ENCODE measurements at regions of chr13 and their contacts with region 1.

Region 1: DNA sequence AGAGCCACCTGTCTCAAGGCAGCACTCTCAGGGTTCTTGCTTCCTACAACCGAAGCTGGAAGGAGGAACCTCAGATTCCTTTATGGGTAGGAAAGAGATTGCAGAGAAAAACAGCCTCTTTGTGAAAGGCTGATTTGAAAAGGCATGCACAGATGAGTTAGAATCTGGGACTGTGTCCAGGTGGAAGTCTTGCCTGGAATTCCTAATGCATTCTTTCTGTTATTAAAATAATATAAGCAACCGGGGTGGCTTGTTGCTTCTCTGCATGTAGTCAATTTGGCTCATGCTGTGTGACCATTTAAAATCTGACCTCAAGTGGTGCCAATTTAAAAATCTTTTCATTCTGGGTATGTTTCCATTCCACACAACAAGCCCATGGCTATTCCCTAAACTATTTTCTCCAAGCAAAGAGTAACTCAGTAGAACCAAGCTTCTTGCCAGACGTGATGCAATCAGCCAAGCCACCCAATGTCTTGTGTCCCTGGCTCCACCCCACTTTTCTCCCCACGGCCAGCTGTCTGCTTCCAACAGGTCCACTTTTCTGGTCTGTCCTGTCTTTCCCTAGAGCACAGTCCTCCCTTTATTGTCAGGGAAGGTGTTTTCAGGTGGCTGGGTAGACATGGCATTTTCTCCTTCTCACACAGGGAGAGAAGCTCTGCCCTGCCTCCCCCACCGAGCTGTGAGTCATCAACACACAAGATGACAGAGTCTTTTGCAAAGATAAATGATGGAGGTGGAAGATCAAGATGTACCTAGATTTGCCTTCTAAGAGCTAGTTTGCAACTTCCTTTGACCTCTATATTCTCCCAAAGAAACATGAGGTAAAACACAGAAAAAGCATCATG is 394.3 kb downstream of the FOXO1 start:
- DNase-seq: peak; percentile 82 to 86
- ATAC-seq: peak; percentile 88
- H3K4me3 ChIP-seq: no peak overlapping the region
- H3K27ac ChIP-seq: peak overlapping the region; percentile 90 to 99
- H3K4me1 ChIP-seq: peaks cover 2 to 4% of the 10 kb centered on the region in 2 donors
- H3K27me3 ChIP-seq: no peaks in the 10 kb centered on the region

Region 2: DNA sequence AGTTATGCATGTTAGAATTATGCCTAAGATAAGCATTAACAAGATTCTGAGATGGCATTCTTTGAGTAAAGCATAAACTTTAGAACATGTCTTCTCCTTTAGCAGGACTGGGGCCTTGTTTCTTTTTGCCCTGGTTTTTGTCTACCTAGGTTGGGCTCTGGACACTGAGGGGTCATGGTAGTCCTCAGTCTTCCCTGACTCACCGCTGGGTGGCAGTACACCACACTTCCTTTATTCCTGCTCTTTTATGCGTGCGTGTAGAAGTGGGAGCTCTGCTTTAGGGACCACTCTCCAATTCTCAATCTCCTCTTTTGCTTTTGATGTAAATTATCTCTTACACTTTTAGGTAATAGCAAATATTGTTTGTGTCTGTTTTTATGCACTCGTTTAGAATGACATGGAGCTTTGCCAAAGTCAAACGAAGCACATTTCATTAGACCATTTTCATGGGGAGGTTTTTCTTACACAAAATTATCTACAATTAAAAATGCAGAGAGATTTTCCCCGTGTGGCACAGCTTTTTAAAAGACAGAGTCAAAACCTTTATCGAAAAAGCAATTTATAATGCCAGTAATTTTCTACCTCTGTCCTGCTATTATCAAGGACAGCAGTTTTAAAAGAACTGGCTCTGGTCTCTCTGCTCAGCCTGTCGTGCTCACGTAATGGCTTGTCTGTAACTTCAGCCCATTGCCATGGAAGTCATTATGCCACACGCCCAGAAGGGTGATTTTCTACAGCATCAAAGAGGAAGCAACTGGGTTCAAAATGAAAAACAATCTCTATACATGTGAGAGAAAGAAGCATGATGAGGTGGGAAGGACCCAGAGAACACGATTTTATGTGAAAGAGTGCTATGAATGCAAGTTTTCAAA is 202.7 kb before region 1 on chr13:
- intact Hi-C with region 1: loop called in 1 of 2 experiments (anchors 1 kb)
- DNase-seq: peak; percentile 83 to 87
- ATAC-seq: peak; percentile 94
- H3K4me3 ChIP-seq: peak overlapping the region in 1 of 2 donors; percentile 31
- H3K27ac ChIP-seq: no peak overlapping the region
- H3K4me1 ChIP-seq: no peaks in the 10 kb centered on the region
- H3K27me3 ChIP-seq: no peaks in the 10 kb centered on the region

Region 3: GRCh38 chr13:40236566-40237168 is 35.5 kb before region 1 on chr13:
- intact Hi-C with region 1: no loop called
- DNase-seq: peak; percentile 63 to 78
- ATAC-seq: peak; percentile 86
- H3K4me3 ChIP-seq: no peak overlapping the region
- H3K27ac ChIP-seq: peak overlapping the region; percentile 99
- H3K4me1 ChIP-seq: peaks cover 0 to 1% of the 10 kb centered on the region in 2 donors
- H3K27me3 ChIP-seq: no peaks in the 10 kb centered on the region

Region 4: DNA sequence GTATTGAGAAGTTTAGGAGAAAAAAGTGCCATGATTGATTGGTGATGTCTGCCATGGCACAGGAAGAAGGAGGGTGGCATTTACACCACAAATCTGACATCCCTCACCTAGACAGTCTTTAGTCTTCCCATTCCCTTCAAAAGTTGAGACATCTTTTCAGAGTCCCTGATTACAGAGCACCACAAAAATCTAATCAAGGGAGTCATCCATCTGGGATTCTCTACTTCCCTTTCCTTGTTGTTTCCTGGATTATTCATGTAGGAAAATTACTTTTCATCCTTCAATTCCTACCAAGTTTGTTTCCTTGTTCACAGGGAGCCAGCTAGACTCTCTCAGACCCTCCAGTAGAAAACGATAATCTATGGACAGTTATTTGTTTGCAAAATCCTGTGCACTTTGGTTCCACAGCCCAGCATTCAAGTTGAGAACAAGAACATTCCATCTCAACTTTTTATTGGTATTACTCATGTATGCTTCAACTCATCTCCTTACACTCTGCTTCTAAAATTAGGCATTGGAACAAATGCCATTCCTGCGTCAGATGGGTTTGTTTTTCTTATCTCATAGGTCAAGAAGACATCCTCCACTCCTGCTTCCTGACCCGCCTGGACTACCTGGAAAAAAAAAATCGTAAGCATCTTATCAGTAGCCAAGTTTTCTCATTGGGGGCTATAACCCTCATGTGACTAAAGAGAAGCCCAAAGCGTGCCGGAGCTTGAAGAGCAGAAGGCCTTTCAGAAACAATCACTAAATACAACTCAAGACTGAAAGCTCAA is 134.4 kb after region 1 on chr13:
- intact Hi-C with region 1: no loop called
- DNase-seq: no peak
- ATAC-seq: no peak
- H3K4me3 ChIP-seq: no peak overlapping the region
- H3K27ac ChIP-seq: no peak overlapping the region
- H3K4me1 ChIP-seq: no peaks in the 10 kb centered on the region
- H3K27me3 ChIP-seq: no peaks in the 10 kb centered on the region

Measured in aorta (tissue), 5 donors.